ENCODE measurements at regions of chr10 and their contacts with region 1.

Region 1: DNA sequence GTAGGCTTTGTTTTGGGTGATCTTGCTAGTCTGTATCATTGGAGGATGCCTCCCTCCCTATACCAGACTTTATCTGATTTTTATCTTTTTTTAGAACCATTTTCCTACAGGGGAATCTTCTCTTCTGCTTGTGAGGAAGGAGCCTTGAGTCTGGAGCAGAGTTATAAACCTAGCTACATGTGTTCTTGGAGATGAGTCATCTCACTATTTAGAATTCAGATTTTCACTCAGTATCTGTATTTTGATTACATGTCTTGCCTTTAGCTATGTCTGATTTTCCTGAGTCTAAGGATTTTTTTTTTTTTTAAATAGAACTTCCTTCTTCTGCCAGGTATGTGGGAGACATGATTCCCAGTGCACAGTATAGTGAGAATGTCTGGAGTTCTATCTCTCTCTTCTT is 211.6 kb upstream of the MBL2 start:
- DNase-seq: no peak
- ATAC-seq: no peak
- H3K4me3 ChIP-seq: no peak overlapping the region
- H3K4me3 Mint-ChIP-seq: no peak overlapping the region
- H3K27ac ChIP-seq: no peak overlapping the region
- H3K27ac Mint-ChIP-seq: no peak overlapping the region
- H3K4me1 ChIP-seq: no peaks in the 10 kb centered on the region
- H3K4me1 Mint-ChIP-seq: no peaks in the 10 kb centered on the region
- H3K27me3 ChIP-seq: no peaks in the 10 kb centered on the region
- H3K27me3 Mint-ChIP-seq: no peaks in the 10 kb centered on the region

Region 2: DNA sequence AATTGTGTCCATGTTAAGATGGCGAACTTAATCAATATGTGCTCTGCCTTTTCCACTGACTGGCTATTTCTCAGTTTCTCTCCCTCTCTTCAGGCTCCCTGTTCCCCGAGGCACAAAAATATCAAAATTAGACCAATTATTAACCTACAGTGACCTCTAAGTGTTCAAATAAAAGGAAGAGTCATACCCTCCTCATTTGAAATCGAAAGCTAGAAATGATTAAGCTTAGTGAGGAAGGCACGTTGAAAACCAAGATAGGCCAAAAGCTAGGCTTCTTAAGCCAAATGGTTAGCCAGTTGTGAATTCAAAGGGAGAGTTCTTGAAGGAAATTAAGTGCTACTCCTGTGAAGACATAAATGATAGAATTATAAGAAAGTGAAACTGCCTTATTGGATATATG is 130.5 kb before region 1 on chr10:
- CTCF ChIA-PET with region 1: interaction called, 10 read pairs
- POLR2A ChIA-PET with region 1: no interaction called
- intact Hi-C with region 1: no loop called
- DNase-seq: no peak
- ATAC-seq: no peak
- H3K4me3 ChIP-seq: no peak overlapping the region
- H3K4me3 Mint-ChIP-seq: no peak overlapping the region
- H3K27ac ChIP-seq: no peak overlapping the region
- H3K27ac Mint-ChIP-seq: no peak overlapping the region
- H3K4me1 ChIP-seq: no peaks in the 10 kb centered on the region
- H3K4me1 Mint-ChIP-seq: no peaks in the 10 kb centered on the region
- H3K27me3 ChIP-seq: no peaks in the 10 kb centered on the region
- H3K27me3 Mint-ChIP-seq: no peaks in the 10 kb centered on the region